ENCODE measurements at regions of chr11 and their contacts with region 1.

Region 1: DNA sequence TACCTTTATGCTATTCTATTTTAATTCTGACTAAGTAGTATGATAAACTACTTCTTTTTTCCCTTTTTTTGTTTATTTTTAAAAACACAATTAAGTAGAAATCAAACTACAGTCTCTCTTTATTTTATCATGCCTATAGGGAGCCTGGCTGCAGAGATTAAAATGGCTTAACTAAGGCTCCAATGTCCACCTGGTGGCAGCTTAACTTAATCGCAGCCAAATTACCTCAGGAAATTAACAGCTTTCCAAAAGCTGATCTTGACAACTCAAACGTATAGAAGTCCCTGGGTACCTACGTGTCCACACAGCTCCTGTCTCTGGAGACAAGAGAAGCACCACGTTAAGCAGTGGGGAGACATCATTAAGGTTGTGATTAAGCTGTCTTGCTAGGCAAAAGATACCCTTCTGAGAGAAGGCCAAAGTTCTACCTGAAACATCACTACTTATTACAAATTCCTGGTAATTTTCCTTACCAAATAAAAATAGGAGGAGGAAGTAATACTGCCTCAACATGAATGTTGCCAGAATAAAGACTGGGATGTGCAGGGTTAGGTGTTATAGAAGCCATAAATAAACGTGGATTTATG is 63.2 kb upstream of the SNX19 start:
- DNase-seq: no peak
- H3K4me3 ChIP-seq: no peak overlapping the region
- H3K27ac ChIP-seq: no peak overlapping the region
- H3K4me1 ChIP-seq: no peaks in the 10 kb centered on the region
- H3K27me3 ChIP-seq: no peaks in the 10 kb centered on the region
- CTCF ChIP-seq: no peak
- POLR2A ChIP-seq: no peak

Region 2: GRCh38 chr11:131449036-131450019 is 469.8 kb after region 1 on chr11:
- intact Hi-C with region 1: no loop called
- DNase-seq: no peak
- H3K4me3 ChIP-seq: no peak overlapping the region
- H3K27ac ChIP-seq: no peak overlapping the region
- H3K4me1 ChIP-seq: no peaks in the 10 kb centered on the region
- H3K27me3 ChIP-seq: no peaks in the 10 kb centered on the region
- CTCF ChIP-seq: no peak
- POLR2A ChIP-seq: no peak

Region 3: DNA sequence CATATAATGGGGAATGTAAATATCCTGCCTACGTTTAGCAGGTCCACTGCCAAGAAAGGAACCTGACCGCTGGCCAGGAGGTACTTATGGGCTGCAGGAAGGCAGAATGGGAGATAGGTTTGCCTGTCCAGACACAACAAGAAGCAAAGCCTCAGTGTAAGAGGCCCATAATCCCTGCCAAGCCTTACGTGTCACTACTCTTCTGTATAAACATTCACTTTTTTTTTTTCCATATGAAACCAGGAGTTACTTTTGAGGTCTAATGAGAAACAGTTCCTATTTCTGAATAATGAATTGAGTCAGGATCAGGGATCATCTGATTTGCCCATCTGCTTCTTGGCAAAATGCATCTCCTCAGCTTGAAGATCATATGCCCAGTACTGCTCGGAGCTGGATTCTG is 621.1 kb after region 1 on chr11:
- intact Hi-C with region 1: loop called (anchors 5 kb)
- DNase-seq: no peak
- H3K4me3 ChIP-seq: no peak overlapping the region
- H3K27ac ChIP-seq: no peak overlapping the region
- H3K4me1 ChIP-seq: no peaks in the 10 kb centered on the region
- H3K27me3 ChIP-seq: no peaks in the 10 kb centered on the region
- CTCF ChIP-seq: no peak
- POLR2A ChIP-seq: no peak

Measured in vagina (tissue), 2 donors.